Common myeloid progenitor, CD34-positive (primary cell): ENCODE measurements at regions of chr6 and their contacts with region 1.

Region 1: GRCh38 chr6:26183581-26184366 is 96.5 kb downstream of the HFE start:
- DNase-seq: peak; percentile 87 to 92 (median 91)
- H3K4me3 ChIP-seq: peak overlapping the region; percentile 46 to 79 (median 70)
- H3K27ac ChIP-seq: peak overlapping the region in 1 of 2 experiments; percentile 70
- H3K4me1 ChIP-seq: peaks cover 9 to 42% (median 27%) of the 10 kb centered on the region in 4 experiments
- H3K27me3 ChIP-seq: no peaks in the 10 kb centered on the region

Region 2: GRCh38 chr6:25959890-25960536 is 223.8 kb before region 1 on chr6:
- CTCF ChIA-PET with region 1: no interaction called
- POLR2A ChIA-PET with region 1: no interaction called
- DNase-seq: no peak
- H3K4me3 ChIP-seq: no peak overlapping the region
- H3K27ac ChIP-seq: no peak overlapping the region
- H3K4me1 ChIP-seq: peaks cover 24 to 40% (median 30%) of the 10 kb centered on the region in 4 experiments
- H3K27me3 ChIP-seq: no peaks in the 10 kb centered on the region

Region 3: DNA sequence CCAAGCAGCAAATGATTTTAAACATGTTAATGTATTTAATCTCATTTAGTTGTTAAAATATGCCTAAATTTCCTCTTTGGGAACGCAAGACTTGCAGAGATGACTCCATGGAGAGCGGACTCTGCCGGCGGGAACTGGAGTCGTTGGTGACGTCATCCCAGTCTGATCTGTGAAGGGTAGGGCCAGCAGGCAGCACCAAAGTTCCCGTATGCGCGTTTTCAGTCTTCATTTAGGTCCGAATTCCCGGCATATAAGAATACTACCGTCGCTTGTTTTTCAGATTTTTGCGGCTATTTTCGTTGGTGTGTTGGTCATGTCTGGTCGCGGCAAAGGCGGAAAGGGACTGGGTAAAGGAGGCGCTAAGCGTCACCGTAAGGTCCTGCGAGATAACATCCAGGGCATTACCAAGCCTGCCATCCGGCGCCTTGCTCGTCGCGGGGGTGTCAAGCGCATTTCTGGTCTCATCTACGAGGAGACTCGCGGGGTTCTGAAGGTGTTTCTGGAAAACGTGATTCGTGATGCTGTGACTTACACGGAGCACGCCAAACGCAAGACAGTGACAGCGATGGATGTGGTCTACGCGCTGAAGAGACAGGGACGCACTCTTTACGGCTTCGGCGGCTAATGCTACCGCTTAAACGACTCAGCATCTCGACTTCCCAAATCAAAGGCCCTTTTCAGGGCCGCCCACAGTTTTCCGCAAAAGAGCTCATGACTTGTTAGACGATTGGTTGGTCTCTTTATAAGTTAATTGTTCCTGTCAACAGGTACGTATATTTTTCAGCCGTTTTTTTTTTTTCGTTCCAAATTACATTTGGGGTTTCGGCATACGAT is 20.8 kb after region 1 on chr6:
- CTCF ChIA-PET with region 1: interaction called, 76 read pairs
- POLR2A ChIA-PET with region 1: interaction called, 38 read pairs
- DNase-seq: peak; percentile 98 to 99 (median 99)
- H3K4me3 ChIP-seq: peak overlapping the region; percentile 75 to 97 (median 87)
- H3K27ac ChIP-seq: peak overlapping the region; percentile 94 to 97
- H3K4me1 ChIP-seq: peaks cover 19 to 50% (median 38%) of the 10 kb centered on the region in 4 experiments
- H3K27me3 ChIP-seq: no peaks in the 10 kb centered on the region